GM10248 (cell line): ENCODE measurements at regions of chr12 and their contacts with region 1.

Region 1: DNA sequence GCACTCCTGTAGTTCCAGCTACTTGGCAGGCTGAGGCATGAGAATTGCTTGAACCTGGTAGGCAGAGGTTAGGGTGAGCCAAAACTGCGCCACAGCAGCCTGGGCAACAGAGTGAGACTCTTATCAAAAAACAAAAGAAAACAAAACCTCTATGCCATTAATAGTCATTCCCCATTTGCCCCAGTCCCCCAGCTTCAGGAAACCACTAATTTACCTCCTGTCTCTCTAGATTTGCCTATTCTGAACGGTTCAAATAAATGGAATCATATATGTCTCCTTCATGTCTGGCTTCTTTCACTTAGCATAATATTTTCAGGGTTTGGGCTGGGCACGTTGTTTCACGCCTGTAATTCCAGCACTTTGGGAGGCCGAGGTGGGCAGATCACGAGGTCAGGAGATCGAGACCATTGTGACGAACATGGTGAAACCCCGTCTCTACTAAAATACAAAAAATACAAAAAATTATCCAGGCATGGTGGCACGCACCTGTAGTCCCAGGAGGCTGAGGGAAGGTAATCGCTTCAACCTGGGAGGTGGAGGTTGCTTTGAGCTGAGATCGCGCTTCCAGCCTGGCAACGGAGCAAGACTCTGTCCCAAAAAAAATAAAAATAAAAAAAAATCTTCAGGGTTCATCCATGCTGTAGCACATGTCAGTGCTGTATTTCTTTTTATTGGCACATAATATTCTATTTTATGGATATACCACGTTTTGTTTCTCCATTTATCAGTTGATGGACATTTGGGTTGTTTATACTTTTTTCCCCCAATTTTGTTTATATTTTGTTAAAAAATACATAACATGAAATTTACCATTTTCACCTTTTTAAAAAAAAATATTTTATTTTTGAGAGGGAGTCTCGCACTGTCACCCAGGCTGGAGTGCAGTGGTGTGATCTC is 31.9 kb downstream of the KNTC1 start:
- DNase-seq: no peak
- CTCF ChIP-seq: no peak

Region 2: DNA sequence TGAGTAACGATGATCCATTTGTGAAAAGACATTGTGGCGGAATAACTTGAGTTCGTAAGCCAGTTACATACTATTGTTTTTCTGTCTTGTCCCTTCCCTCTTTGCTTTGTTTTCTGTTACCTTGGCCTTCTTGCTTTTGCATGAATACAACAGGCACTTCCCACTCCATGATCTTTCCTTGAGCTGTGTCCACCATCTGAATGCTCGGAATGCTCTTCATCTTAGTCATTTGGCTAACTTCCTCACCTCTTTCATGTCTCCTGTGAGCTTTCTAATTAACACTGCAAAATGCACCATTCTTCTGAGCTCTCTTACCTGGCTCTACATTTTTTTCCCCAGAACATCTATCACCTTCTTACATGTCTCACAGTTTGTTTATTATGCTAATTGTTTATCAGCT is 22.0 kb before region 1 on chr12:
- CTCF ChIA-PET with region 1: interaction called, 13 read pairs
- POLR2A ChIA-PET with region 1: no interaction called
- DNase-seq: no peak
- CTCF ChIP-seq: no peak

Region 3: DNA sequence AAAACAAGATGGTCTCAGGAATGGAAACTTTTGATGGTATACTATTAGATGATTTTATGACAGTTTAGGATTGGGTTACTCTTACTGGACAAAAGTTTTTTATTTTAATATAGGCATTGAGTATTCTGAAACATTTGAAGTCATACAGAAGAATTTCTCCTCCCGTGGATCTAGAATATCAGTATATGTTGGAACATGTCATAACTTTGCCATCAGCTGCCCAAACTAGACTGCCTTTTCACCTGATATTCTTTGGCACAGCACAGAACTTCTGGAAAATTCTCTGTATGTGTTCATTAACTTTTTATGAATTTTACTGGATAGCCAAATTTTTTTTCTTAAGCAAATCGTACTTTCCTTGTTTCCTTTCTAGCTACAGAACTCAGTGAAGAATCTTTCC is 43.5 kb after region 1 on chr12:
- CTCF ChIA-PET with region 1: no interaction called
- POLR2A ChIA-PET with region 1: no interaction called
- DNase-seq: no peak
- CTCF ChIP-seq: no peak